A549 (cell line): ENCODE measurements at regions of chr1 and their contacts with region 1.

Region 1: GRCh38 chr1:26472901-26473845 is 933 bp downstream of the HMGN2 start:
- DNase-seq: peak; percentile 72 to 88
- ATAC-seq: peak; percentile 60 to 70
- H3K4me3 ChIP-seq: peak overlapping the region; percentile 83
- H3K27ac ChIP-seq: peak overlapping the region; percentile 98 to 100
- H3K4me1 ChIP-seq: peaks cover 20% of the 10 kb centered on the region; the same call in 2 of the 3 replicates
- CTCF ChIP-seq: no peak
- EP300 ChIP-seq: no peak
- POLR2A ChIP-seq: no peak
- RAD21 ChIP-seq: no peak

Region 2: GRCh38 chr1:26431979-26432695 is 41.0 kb before region 1 on chr1 and contains the start of gene DHDDS:
- CTCF ChIA-PET with region 1: interaction called, 8 read pairs
- POLR2A ChIA-PET with region 1: interaction called, 18 read pairs
- DNase-seq: peak; percentile 86 to 97
- ATAC-seq: peak; percentile 96 to 98
- H3K4me3 ChIP-seq: peak within 1 kb of the TSS; percentile 69
- H3K27ac ChIP-seq: peak within 1 kb of the TSS; percentile 79 to 91
- H3K4me1 ChIP-seq: peaks cover 9% of the 10 kb centered on the region; the same call in 1 of the 3 replicates
- CTCF ChIP-seq: no peak
- EP300 ChIP-seq: no peak
- POLR2A ChIP-seq: peak; percentile 68
- RAD21 ChIP-seq: no peak
- polyA plus RNA-seq, gene DHDDS: 20.4 and 26.0 TPM in 2 replicates

Region 3: GRCh38 chr1:26459573-26460031 is 13.6 kb before region 1 on chr1:
- CTCF ChIA-PET with region 1: interaction called, 14 read pairs
- POLR2A ChIA-PET with region 1: no interaction called
- DNase-seq: no peak
- ATAC-seq: no peak
- H3K4me3 ChIP-seq: no peak overlapping the region
- H3K27ac ChIP-seq: no peak overlapping the region
- H3K4me1 ChIP-seq: no peaks in the 10 kb centered on the region
- CTCF ChIP-seq: no peak
- EP300 ChIP-seq: no peak
- POLR2A ChIP-seq: no peak
- RAD21 ChIP-seq: no peak